Vagina (tissue), 2 donors: ENCODE measurements at regions of chr17 and their contacts with region 1.

Region 1: GRCh38 chr17:57861000-57861789 is 11.4 kb upstream of the MRPS23 start:
- DNase-seq: peak in 1 of 2 donors; percentile 87
- H3K4me3 ChIP-seq: peak overlapping the region; percentile 48 to 58
- H3K27ac ChIP-seq: peak overlapping the region; percentile 82
- H3K4me1 ChIP-seq: peaks cover 47% of the 10 kb centered on the region
- H3K27me3 ChIP-seq: no peaks in the 10 kb centered on the region
- CTCF ChIP-seq: no peak
- POLR2A ChIP-seq: no peak

Region 2: GRCh38 chr17:57993471-57994365 is 132.5 kb after region 1 on chr17:
- intact Hi-C with region 1: loop called (anchors 2 kb)
- DNase-seq: no peak
- H3K4me3 ChIP-seq: no peak overlapping the region
- H3K27ac ChIP-seq: no peak overlapping the region
- H3K4me1 ChIP-seq: peaks cover 34% of the 10 kb centered on the region
- H3K27me3 ChIP-seq: no peaks in the 10 kb centered on the region
- CTCF ChIP-seq: no peak
- POLR2A ChIP-seq: no peak

Region 3: GRCh38 chr17:57999496-58000017 is 138.4 kb after region 1 on chr17:
- intact Hi-C with region 1: loop called (anchors 2 kb)
- DNase-seq: no peak
- H3K4me3 ChIP-seq: no peak overlapping the region
- H3K27ac ChIP-seq: no peak overlapping the region
- H3K4me1 ChIP-seq: peaks cover 39% of the 10 kb centered on the region
- H3K27me3 ChIP-seq: no peaks in the 10 kb centered on the region
- CTCF ChIP-seq: peak; percentile 63 to 76 (median 67)
- POLR2A ChIP-seq: no peak